ENCODE measurements at regions of chr6 and their contacts with region 1.

Region 1: DNA sequence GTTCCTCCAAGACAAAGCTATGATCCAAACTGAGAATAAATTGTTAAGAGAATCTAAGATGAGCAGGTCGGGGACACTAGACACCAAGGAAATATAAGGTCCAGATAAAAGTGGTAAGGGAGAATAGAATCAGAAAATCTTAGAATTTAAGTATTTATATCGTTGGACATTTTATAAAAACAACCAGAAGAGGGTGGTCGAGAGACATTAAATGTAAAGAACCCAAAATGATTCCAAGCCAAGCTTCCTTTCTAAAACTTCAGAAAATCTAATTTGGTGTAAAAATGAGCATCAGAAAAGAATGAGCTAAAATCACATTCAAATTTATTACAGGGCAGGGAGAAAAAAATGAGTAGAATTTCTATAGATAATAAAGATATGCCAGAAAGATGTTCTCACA is 97.8 kb upstream of the OGFRL1 start:
- DNase-seq: peak; percentile 31
- H3K4me3 ChIP-seq: no peak overlapping the region
- CTCF ChIP-seq: no peak

Region 2: GRCh38 chr6:71367756-71368155 is 176.9 kb after region 1 on chr6:
- in situ Hi-C with region 1: loop called (anchors 5 kb)
- DNase-seq: no peak
- H3K4me3 ChIP-seq: no peak overlapping the region
- CTCF ChIP-seq: no peak

Region 3: DNA sequence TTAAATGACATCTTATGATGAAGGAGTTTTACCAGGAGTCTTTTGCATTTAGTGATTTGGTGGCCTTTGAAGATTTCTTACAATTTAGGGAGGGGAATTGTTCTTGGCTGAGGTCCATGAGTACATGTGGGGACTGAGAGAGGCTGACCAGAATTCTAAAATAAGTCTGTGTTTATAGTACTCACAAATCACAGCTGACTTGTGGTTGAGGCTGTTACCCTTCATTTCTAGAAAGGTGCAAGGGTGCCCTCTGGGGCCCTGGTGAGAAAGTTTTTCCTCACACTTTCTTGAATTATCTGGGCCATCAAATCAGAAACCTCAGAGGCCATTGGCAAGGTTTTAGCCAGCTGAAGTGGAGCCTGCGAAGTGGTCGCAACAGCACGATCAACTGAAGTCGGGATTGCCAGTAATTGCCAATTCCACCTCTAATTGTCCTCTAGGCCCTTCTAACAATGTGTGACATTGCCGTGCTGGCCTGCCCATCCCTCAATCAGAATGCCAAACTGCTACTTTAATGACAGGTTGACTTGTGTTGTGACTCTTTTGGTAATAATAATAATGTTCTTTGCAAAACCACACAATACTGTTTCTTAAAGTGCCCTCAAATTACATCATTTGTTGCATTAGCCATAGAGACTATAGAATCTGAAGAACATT is 319.4 kb after region 1 on chr6:
- in situ Hi-C with region 1: loop called (anchors 25 kb)
- DNase-seq: peak; percentile 79
- H3K4me3 ChIP-seq: no peak overlapping the region
- CTCF ChIP-seq: peak; percentile 67